Natural killer cell (primary cell): ENCODE measurements at regions of chr16 and their contacts with region 1.

Region 1: GRCh38 chr16:58336332-58337089 is 41.7 kb upstream of the PRSS54 start:
- DNase-seq: peak; percentile 84 to 87
- ATAC-seq: peak; percentile 85 to 98 (median 92)
- H3K4me3 ChIP-seq: no peak overlapping the region
- H3K4me3 Mint-ChIP-seq: peak overlapping the region; percentile 57
- H3K27ac ChIP-seq: no peak overlapping the region
- H3K27ac Mint-ChIP-seq: no peak overlapping the region
- H3K4me1 ChIP-seq: peaks cover 8% of the 10 kb centered on the region
- H3K4me1 Mint-ChIP-seq: peaks cover 5 to 7% of the 10 kb centered on the region in 2 donors
- H3K27me3 ChIP-seq: no peaks in the 10 kb centered on the region
- H3K27me3 Mint-ChIP-seq: peaks cover under 1 to 3% of the 10 kb centered on the region in 2 donors
- CTCF ChIP-seq: peak; percentile 91

Region 2: GRCh38 chr16:58487566-58488351 is 151.2 kb after region 1 on chr16:
- intact Hi-C with region 1: loop called (anchors 1 kb)
- DNase-seq: peak; percentile 71 to 85
- ATAC-seq: peak; percentile 75 to 96 (median 96)
- H3K4me3 ChIP-seq: no peak overlapping the region
- H3K4me3 Mint-ChIP-seq: no peak overlapping the region
- H3K27ac ChIP-seq: no peak overlapping the region
- H3K27ac Mint-ChIP-seq: no peak overlapping the region
- H3K4me1 ChIP-seq: peaks cover 8% of the 10 kb centered on the region
- H3K4me1 Mint-ChIP-seq: no peaks in the 10 kb centered on the region
- H3K27me3 ChIP-seq: no peaks in the 10 kb centered on the region
- H3K27me3 Mint-ChIP-seq: peaks cover 0 to 3% of the 10 kb centered on the region in 2 donors
- CTCF ChIP-seq: peak; percentile 81

Region 3: DNA sequence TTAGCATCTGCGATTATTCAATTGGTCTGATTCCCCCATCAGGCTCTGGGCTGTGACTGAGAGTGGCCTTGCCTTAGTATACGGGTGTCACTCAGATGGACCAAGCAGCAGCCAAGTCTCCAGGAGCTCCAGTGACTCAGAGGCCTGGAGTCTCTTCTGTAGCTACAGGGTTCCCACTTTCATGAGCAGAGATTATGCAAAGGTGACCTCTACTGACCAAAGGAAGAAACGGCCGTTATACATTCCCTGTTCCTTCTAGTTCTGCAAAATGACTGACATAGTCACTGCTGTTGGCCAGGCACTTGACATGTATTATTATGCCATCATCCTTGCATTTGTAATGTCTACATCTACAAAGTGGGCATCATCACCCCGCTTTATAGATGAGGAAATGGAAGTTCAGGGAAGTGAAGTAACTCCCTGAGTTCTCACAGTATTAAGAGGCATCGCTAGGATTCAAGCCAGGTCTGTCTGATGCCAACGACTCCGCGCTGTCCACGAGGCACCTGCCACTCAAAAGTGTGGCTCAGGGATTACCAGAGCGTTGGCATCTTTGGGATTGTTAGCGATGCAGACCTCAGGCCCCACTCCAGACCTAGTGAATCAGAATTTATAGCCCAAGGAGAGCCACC is 324.8 kb after region 1 on chr16:
- intact Hi-C with region 1: loop called (anchors 2 kb)
- DNase-seq: peak in 1 of 2 donors; percentile 50
- ATAC-seq: peak; percentile 58 to 78 (median 73)
- H3K4me3 ChIP-seq: no peak overlapping the region
- H3K4me3 Mint-ChIP-seq: no peak overlapping the region
- H3K27ac ChIP-seq: no peak overlapping the region
- H3K27ac Mint-ChIP-seq: no peak overlapping the region
- H3K4me1 ChIP-seq: no peaks in the 10 kb centered on the region
- H3K4me1 Mint-ChIP-seq: no peaks in the 10 kb centered on the region
- H3K27me3 ChIP-seq: no peaks in the 10 kb centered on the region
- H3K27me3 Mint-ChIP-seq: peaks cover 0 to 3% of the 10 kb centered on the region in 2 donors
- CTCF ChIP-seq: no peak

Region 4: GRCh38 chr16:58755989-58756649 is 419.6 kb after region 1 on chr16:
- intact Hi-C with region 1: loop called (anchors 1 kb)
- DNase-seq: peak; percentile 45 to 88
- ATAC-seq: peak; percentile 89 to 93 (median 92)
- H3K4me3 ChIP-seq: no peak overlapping the region
- H3K4me3 Mint-ChIP-seq: peak overlapping the region; percentile 43
- H3K27ac ChIP-seq: no peak overlapping the region
- H3K27ac Mint-ChIP-seq: peak overlapping the region; percentile 45 to 70
- H3K4me1 ChIP-seq: peaks cover 8% of the 10 kb centered on the region
- H3K4me1 Mint-ChIP-seq: peaks cover 10% of the 10 kb centered on the region in 2 donors
- H3K27me3 ChIP-seq: no peaks in the 10 kb centered on the region
- H3K27me3 Mint-ChIP-seq: peaks cover 0 to 2% of the 10 kb centered on the region in 2 donors
- CTCF ChIP-seq: peak; percentile 64